Breast epithelium (tissue), 4 donors: ENCODE measurements at regions of chr4 and their contacts with region 1.

Region 1: GRCh38 chr4:1792832-1793495 is at the start of gene FGFR3:
- DNase-seq: no peak
- H3K4me3 ChIP-seq: peak within 1 kb of the TSS; percentile 41 to 79 (median 55)
- H3K27ac ChIP-seq: no peak within 1 kb of the TSS
- H3K4me1 ChIP-seq: peaks cover 14 to 17% of the 10 kb centered on the region in 2 donors
- H3K27me3 ChIP-seq: peaks cover 16 to 41% of the 10 kb centered on the region in 2 donors
- CTCF ChIP-seq: no peak
- POLR2A ChIP-seq: no peak
- total RNA-seq, gene FGFR3: 0.80 to 3.5 (median 2.0) TPM

Region 2: DNA sequence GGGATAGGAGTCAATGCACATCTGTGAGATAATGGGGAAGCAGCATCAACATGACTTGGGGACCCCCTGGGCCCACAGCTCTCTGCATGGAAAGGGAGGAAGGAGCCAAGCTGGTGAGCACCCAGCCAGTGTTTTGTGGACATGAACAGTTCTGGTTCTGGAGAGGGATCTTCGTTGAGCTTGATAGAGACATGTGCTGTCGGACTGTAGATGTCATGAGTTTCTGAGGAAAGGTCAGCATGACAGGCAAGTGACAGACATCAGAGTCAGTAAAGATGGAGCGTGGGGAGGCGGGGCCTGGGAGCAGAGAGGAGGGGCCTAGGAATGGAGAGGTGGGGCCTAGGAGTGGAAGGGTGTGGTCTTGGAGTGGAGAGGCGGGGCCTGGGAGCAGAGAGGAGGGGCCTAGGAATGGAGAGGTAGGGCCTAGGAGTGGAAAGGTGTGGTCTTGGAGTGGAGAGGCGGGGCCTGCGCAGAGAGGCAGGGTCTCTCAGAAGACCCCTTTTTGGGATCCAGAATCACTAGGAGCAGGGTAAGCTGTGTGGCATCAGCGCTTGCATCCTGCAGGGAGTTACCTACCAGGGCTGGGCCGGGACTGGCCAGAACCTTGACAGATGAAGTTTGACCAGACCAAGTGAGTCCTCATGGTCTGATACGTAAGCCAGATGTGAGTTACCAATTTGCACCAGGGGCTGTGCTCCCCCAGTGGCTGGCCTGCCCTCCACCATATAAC is 1260.2 kb before region 1 on chr4:
- intact Hi-C with region 1: loop called (anchors 5 kb)
- DNase-seq: peak in 1 of 2 donors; percentile 4
- H3K4me3 ChIP-seq: no peak overlapping the region
- H3K27ac ChIP-seq: no peak overlapping the region
- H3K4me1 ChIP-seq: no peaks in the 10 kb centered on the region
- H3K27me3 ChIP-seq: no peaks in the 10 kb centered on the region
- CTCF ChIP-seq: no peak
- POLR2A ChIP-seq: no peak

Region 3: DNA sequence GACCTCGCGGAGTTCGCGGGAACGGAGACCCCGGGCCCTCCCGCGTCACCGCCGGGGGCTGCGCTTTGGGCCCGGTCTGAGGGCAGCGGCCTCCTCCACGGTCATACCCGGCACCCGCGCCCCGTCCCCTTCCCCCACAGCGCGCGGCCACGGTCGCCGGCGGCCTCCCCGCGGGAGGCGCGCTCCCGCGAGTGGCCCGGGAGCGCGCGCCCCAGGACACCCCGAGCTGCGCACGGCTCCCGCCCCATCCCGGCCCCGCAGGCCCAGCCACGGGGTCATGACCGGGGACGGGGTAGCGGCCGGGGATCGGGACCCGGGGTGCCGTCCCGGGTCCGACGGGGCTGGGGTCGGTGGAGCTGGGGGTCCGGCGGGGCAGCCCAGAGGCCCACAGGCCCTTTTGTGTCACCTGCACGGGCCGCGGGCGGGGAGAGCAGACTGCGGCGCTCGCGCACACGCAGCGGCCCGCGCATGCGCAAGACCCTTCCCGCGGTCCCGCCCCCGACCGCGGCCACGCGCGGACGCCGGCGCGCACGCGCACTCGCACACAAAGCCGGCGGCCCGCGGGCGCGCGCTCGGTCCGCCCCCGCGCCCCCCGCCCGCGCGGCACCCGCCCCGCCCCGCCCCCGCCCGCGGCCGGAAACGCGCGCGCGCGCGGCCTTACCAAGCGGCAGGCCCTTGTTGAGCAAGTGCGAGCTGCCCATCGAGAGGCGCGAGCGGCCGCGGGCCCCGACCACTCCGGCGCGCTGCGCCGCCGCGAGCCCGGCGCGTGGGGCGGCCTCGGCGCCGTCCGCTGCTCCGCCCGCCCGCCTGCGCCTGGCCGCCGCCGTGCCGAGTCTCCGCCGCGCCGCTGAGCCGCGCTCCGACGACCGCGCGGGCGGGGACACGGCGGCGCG is 544.5 kb before region 1 on chr4 and contains the start of gene CTBP1:
- intact Hi-C with region 1: no loop called
- DNase-seq: peak; percentile 61 to 64
- H3K4me3 ChIP-seq: peak within 1 kb of the TSS; percentile 60 to 93 (median 77)
- H3K27ac ChIP-seq: peak within 1 kb of the TSS; percentile 92 to 94
- H3K4me1 ChIP-seq: peaks cover 25 to 42% of the 10 kb centered on the region in 2 donors
- H3K27me3 ChIP-seq: no peaks in the 10 kb centered on the region
- CTCF ChIP-seq: no peak
- POLR2A ChIP-seq: no peak
- total RNA-seq, gene CTBP1: 130 to 159 (median 133) TPM

Region 4: GRCh38 chr4:1654216-1654955 is 138.6 kb before region 1 on chr4:
- intact Hi-C with region 1: loop called (anchors 10 kb)
- DNase-seq: no peak
- H3K4me3 ChIP-seq: no peak overlapping the region
- H3K27ac ChIP-seq: no peak overlapping the region
- H3K4me1 ChIP-seq: no peaks in the 10 kb centered on the region
- H3K27me3 ChIP-seq: no peaks in the 10 kb centered on the region
- CTCF ChIP-seq: no peak
- POLR2A ChIP-seq: no peak